ENCODE measurements at regions of chr7 and their contacts with region 1.

Region 1: DNA sequence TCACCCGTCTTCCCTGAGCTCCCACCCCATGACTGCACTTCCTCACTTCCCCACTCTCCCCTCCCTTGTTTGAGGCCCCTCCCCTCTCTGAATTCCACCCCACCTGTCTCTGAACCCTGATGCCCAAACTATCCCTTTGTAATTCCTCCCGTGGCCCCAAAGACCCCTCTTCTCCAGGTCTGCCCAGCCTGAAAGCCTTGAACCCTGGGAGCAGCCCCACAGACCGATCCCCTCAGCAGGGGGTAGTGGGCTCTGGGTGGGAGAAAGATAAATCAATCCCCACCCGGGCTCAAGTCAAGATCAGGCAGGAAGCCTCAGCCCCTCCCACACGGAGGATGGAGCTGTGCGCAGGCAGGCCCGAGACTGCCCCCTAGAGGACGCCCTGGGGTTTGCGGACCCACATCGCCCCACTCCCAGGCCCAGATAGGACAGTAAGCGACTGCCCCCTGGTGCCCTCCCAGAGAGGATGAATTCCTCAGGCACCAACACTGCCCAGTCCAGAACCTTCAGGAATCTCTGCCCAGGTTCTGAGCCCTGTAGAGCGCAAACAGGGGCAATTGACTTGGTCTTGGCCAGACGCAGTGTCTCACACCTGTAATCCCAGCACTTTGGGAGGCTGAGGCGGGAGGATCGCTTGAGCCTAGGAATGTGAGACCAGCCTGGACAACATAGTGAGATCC is 11.7 kb downstream of the HSPB1 start:
- DNase-seq: peak; percentile 95 to 98 (median 97)
- H3K4me3 ChIP-seq: no peak overlapping the region
- H3K27ac ChIP-seq: no peak overlapping the region
- H3K4me1 ChIP-seq: peaks cover 0 to 10% (median 4%) of the 10 kb centered on the region in 3 donors
- H3K27me3 ChIP-seq: no peaks in the 10 kb centered on the region
- CTCF ChIP-seq: peak; percentile 100

Region 2: DNA sequence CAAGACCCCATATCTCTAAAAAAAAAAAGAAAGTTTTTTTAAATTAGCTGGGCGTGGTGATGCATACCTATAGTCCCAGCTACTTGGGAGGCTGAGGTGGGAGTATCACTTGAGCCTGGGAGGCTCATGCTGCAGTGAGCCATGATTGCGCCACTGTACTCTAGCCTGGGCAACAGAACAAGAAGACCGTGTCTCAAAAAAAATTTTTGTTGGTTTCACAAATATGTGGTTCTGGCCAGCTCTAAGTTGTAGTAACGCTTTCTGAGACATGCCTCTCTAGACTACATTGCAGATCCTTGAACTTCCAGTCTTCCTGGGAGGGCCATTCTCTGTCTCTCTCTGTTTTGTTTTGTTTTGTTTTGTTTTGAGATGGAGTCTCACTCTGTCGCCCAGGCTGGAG is 459.9 kb before region 1 on chr7:
- intact Hi-C with region 1: no loop called
- DNase-seq: no peak
- H3K4me3 ChIP-seq: no peak overlapping the region
- H3K27ac ChIP-seq: no peak overlapping the region
- H3K4me1 ChIP-seq: no peaks in the 10 kb centered on the region
- H3K27me3 ChIP-seq: no peaks in the 10 kb centered on the region
- CTCF ChIP-seq: no peak

Region 3: DNA sequence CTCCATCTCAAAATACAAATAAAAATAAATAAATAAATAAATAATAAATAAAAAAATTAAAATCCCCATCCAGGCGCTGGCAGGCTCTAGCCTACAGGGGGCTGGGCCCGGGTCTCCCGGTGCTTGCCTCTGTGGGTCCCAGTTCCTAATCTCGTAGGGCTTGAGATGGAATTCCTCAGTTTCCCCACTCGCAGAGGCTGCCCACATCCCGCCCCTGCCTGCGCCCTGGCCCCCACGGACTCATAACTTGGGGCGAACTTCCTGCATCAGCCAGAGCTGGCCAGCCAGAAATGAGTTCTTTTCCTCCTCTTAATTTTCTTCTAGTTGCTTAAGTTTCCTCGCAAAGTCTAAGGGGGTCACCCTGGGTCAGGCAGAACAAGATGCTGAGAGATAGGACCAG is 134.5 kb before region 1 on chr7:
- intact Hi-C with region 1: loop called (anchors 10 kb)
- DNase-seq: no peak
- H3K4me3 ChIP-seq: no peak overlapping the region
- H3K27ac ChIP-seq: no peak overlapping the region
- H3K4me1 ChIP-seq: no peaks in the 10 kb centered on the region
- H3K27me3 ChIP-seq: no peaks in the 10 kb centered on the region
- CTCF ChIP-seq: no peak

Measured in kidney (tissue), 22 donors.